ENCODE measurements at regions of chr19 and their contacts with region 1.

Region 1: GRCh38 chr19:11987405-11988281 is 22.8 kb downstream of the ZNF763 start:
- DNase-seq: peak; percentile 93
- ATAC-seq: peak; percentile 93
- H3K4me3 ChIP-seq: peak overlapping the region; percentile 86 to 98 (median 97)
- H3K4me3 Mint-ChIP-seq: peak overlapping the region; percentile 96
- H3K27ac ChIP-seq: peak overlapping the region; percentile 85 to 92
- H3K27ac Mint-ChIP-seq: peak overlapping the region; percentile 89
- H3K4me1 ChIP-seq: peaks cover 0 to 5% of the 10 kb centered on the region in 2 donors
- H3K4me1 Mint-ChIP-seq: peaks cover 24% of the 10 kb centered on the region
- H3K27me3 ChIP-seq: no peaks in the 10 kb centered on the region
- H3K27me3 Mint-ChIP-seq: no peaks in the 10 kb centered on the region
- CTCF ChIP-seq: no peak

Region 2: GRCh38 chr19:11699931-11700794 is 287.5 kb before region 1 on chr19:
- CTCF ChIA-PET with region 1: interaction called, 10 read pairs
- POLR2A ChIA-PET with region 1: no interaction called
- intact Hi-C with region 1: no loop called
- DNase-seq: peak; percentile 54
- ATAC-seq: no peak
- H3K4me3 ChIP-seq: no peak overlapping the region
- H3K4me3 Mint-ChIP-seq: no peak overlapping the region
- H3K27ac ChIP-seq: no peak overlapping the region
- H3K27ac Mint-ChIP-seq: no peak overlapping the region
- H3K4me1 ChIP-seq: peaks cover 1% of the 10 kb centered on the region in 2 donors
- H3K4me1 Mint-ChIP-seq: peaks cover under 1% of the 10 kb centered on the region
- H3K27me3 ChIP-seq: peaks cover 0 to 7% (median 3%) of the 10 kb centered on the region in 4 experiments
- H3K27me3 Mint-ChIP-seq: peaks cover 11% of the 10 kb centered on the region
- CTCF ChIP-seq: peak; percentile 83

Region 3: GRCh38 chr19:11881151-11881800 is 106.4 kb before region 1 on chr19:
- CTCF ChIA-PET with region 1: interaction called, 9 read pairs
- POLR2A ChIA-PET with region 1: no interaction called
- intact Hi-C with region 1: loop called (anchors 1 kb)
- DNase-seq: peak; percentile 78
- ATAC-seq: peak; percentile 56
- H3K4me3 ChIP-seq: no peak overlapping the region
- H3K4me3 Mint-ChIP-seq: no peak overlapping the region
- H3K27ac ChIP-seq: no peak overlapping the region
- H3K27ac Mint-ChIP-seq: no peak overlapping the region
- H3K4me1 ChIP-seq: peaks cover 0 to 6% of the 10 kb centered on the region in 2 donors
- H3K4me1 Mint-ChIP-seq: peaks cover 4% of the 10 kb centered on the region
- H3K27me3 ChIP-seq: no peaks in the 10 kb centered on the region
- H3K27me3 Mint-ChIP-seq: no peaks in the 10 kb centered on the region
- CTCF ChIP-seq: peak; percentile 77

Region 4: GRCh38 chr19:12126707-12127106 is 139.1 kb after region 1 on chr19:
- CTCF ChIA-PET with region 1: no interaction called
- POLR2A ChIA-PET with region 1: no interaction called
- intact Hi-C with region 1: no loop called
- DNase-seq: peak; percentile 37
- ATAC-seq: no peak
- H3K4me3 ChIP-seq: no peak overlapping the region
- H3K4me3 Mint-ChIP-seq: no peak overlapping the region
- H3K27ac ChIP-seq: no peak overlapping the region
- H3K27ac Mint-ChIP-seq: no peak overlapping the region
- H3K4me1 ChIP-seq: no peaks in the 10 kb centered on the region
- H3K4me1 Mint-ChIP-seq: no peaks in the 10 kb centered on the region
- H3K27me3 ChIP-seq: no peaks in the 10 kb centered on the region
- H3K27me3 Mint-ChIP-seq: no peaks in the 10 kb centered on the region
- CTCF ChIP-seq: peak; percentile 61

Region 5: GRCh38 chr19:12162882-12163806 is 175.5 kb after region 1 on chr19 and contains the start of gene ZNF136:
- CTCF ChIA-PET with region 1: no interaction called
- POLR2A ChIA-PET with region 1: no interaction called
- intact Hi-C with region 1: no loop called
- DNase-seq: peak; percentile 94
- ATAC-seq: peak; percentile 99
- H3K4me3 ChIP-seq: peak within 1 kb of the TSS; percentile 58 to 96 (median 91)
- H3K4me3 Mint-ChIP-seq: peak within 1 kb of the TSS; percentile 92
- H3K27ac ChIP-seq: peak within 1 kb of the TSS; percentile 96 to 99
- H3K27ac Mint-ChIP-seq: peak within 1 kb of the TSS; percentile 99
- H3K4me1 ChIP-seq: peaks cover 10 to 15% of the 10 kb centered on the region in 2 donors
- H3K4me1 Mint-ChIP-seq: peaks cover 34% of the 10 kb centered on the region
- H3K27me3 ChIP-seq: no peaks in the 10 kb centered on the region
- H3K27me3 Mint-ChIP-seq: no peaks in the 10 kb centered on the region
- CTCF ChIP-seq: no peak
- total RNA-seq, gene ZNF136: 30.8 and 33.5 TPM in 2 replicates

Measured in B cell (primary cell).